PC-9 (cell line): ENCODE measurements at regions of chr6 and their contacts with region 1.

Region 1: GRCh38 chr6:125273965-125274364 is 27.8 kb downstream of the HDDC2 start:
- DNase-seq: peak; percentile 87 to 96
- H3K4me3 ChIP-seq: no peak overlapping the region
- H3K27ac ChIP-seq: peak overlapping the region; percentile 71
- H3K4me1 ChIP-seq: peaks cover 20% of the 10 kb centered on the region
- H3K27me3 ChIP-seq: no peaks in the 10 kb centered on the region
- CTCF ChIP-seq: no peak

Region 2: GRCh38 chr6:125123788-125124777 is 149.9 kb before region 1 on chr6:
- CTCF ChIA-PET with region 1: no interaction called
- POLR2A ChIA-PET with region 1: no interaction called
- intact Hi-C with region 1: loop called (anchors 1 kb)
- DNase-seq: peak; percentile 57 to 84
- H3K4me3 ChIP-seq: no peak overlapping the region
- H3K27ac ChIP-seq: peak overlapping the region; percentile 30; the same call in 1 of the 2 replicates
- H3K4me1 ChIP-seq: peaks cover 19% of the 10 kb centered on the region
- H3K27me3 ChIP-seq: no peaks in the 10 kb centered on the region
- CTCF ChIP-seq: no peak; the same call in 1 of the 2 replicates